Activated CD4-positive, alpha-beta memory T cell treated with anti-CD3 and anti-CD28 coated beads for 36 hours (primary cell): ENCODE measurements at regions of chr17 and their contacts with region 1.

Region 1: GRCh38 chr17:7687908-7688807 is at the start of gene WRAP53:
- DNase-seq: peak; percentile 98
- H3K4me3 Mint-ChIP-seq: peak within 1 kb of the TSS; percentile 100
- H3K27ac Mint-ChIP-seq: peak within 1 kb of the TSS; percentile 100
- H3K4me1 Mint-ChIP-seq: peaks cover 31% of the 10 kb centered on the region
- H3K27me3 Mint-ChIP-seq: no peaks in the 10 kb centered on the region
- total RNA-seq, gene WRAP53: 20.2 to 23.3 TPM

Region 2: GRCh38 chr17:7045909-7046724 is 642.0 kb before region 1 on chr17:
- CTCF ChIA-PET with region 1: interaction called, 6 read pairs
- POLR2A ChIA-PET with region 1: no interaction called
- intact Hi-C with region 1: loop called (anchors 2 kb)
- DNase-seq: peak; percentile 63
- H3K4me3 Mint-ChIP-seq: peak overlapping the region; percentile 70
- H3K27ac Mint-ChIP-seq: peak overlapping the region; percentile 87
- H3K4me1 Mint-ChIP-seq: peaks cover 45% of the 10 kb centered on the region
- H3K27me3 Mint-ChIP-seq: peaks cover 2% of the 10 kb centered on the region

Region 3: DNA sequence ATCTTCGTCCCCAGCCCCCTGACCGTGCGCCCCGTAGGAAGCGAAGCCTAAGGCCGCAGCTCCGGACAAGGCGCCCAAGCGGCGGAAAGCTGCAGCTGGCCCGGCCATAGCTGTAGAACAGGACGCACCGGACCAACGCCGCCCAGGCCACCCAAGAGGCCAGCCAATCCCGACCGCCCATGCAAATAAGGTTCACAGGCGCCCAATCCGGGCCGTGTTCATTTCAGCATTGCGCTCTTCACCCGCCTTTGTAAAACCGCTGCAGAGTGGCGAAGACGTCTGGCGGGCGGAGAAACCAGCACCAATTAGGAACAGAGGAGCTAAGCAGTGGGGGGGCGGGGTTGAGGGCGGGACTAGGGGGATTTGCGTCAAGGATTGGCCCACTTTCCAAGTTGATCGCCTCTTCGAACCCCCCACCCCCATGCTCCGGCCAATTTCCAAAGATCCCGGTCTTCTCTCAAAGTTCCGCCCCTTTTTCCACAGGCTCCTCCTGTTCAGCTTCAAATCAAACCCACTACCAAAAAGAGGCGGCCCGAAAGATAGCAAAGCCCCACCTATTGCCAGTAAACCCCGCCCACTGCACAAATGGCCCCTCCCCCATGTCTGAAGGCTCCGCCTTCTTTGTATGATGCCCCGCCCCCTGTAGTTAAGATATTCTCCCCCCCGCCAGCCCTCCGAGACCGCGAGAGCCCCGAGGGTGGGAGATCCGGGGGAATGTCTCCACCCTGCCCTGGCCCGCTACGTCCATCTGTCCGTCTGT is 284.0 kb before region 1 on chr17 and contains the start of gene TMEM256:
- CTCF ChIA-PET with region 1: interaction called, 3 read pairs
- POLR2A ChIA-PET with region 1: interaction called, 8 read pairs
- intact Hi-C with region 1: loop called (anchors 1 kb)
- DNase-seq: peak; percentile 99
- H3K4me3 Mint-ChIP-seq: peak within 1 kb of the TSS; percentile 97
- H3K27ac Mint-ChIP-seq: peak within 1 kb of the TSS; percentile 92
- H3K4me1 Mint-ChIP-seq: peaks cover 25% of the 10 kb centered on the region
- H3K27me3 Mint-ChIP-seq: no peaks in the 10 kb centered on the region
- total RNA-seq, gene TMEM256: 87.0 to 88.5 TPM

Region 4: GRCh38 chr17:7572588-7573323 is 115.4 kb before region 1 on chr17:
- CTCF ChIA-PET with region 1: interaction called, 7 read pairs
- POLR2A ChIA-PET with region 1: interaction called, 18 read pairs
- intact Hi-C with region 1: loop called (anchors 1 kb)
- DNase-seq: peak; percentile 100
- H3K4me3 Mint-ChIP-seq: peak overlapping the region; percentile 99
- H3K27ac Mint-ChIP-seq: peak overlapping the region; percentile 100
- H3K4me1 Mint-ChIP-seq: peaks cover 50% of the 10 kb centered on the region
- H3K27me3 Mint-ChIP-seq: peaks cover 2% of the 10 kb centered on the region

Region 5: DNA sequence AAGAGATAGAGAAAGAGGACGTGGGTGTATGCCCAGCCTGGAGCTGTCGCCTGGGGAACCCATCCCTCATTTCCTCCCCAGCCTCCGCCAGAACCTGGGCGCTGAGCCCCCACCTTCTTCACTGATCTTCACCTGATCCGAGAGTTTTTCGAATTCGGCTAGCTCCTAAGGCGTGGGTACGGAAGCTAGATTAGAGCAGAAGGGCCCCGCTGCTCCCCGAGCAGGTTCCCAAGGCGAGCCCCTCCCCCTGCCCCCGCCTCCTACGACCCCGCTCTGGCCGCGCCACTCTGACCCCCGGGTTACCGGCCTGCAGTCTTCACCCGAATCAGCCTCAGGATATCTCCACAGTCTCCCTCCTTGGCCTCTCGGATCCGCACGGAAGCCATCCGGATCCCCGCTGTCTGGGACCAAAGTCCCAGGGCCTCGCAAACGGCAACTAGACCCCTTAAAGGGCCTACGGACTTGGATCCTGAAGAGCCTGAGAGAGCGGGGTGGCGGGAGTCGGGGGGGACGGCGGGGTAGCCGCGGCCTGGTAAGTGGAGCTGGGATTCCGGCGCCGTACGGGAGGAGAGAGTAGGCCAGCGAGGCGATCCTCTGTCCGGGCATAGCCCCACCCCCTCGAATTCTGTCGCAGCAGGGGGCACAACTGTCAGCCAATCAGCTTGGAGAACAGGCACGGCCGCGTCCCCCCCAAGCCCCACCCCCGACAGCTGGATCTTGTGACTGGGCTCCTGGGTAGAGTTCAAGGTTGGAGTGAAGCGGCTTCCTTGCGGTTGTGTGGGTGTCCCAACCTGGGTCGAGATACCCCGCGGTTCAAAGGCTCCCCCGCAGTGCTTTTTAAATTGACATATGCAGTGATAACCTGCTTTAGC is 60.7 kb before region 1 on chr17 and contains the start of gene SAT2:
- CTCF ChIA-PET with region 1: interaction called, 61 read pairs
- POLR2A ChIA-PET with region 1: interaction called, 24 read pairs
- intact Hi-C with region 1: loop called (anchors 1 kb)
- DNase-seq: peak; percentile 92
- H3K4me3 Mint-ChIP-seq: peak within 1 kb of the TSS; percentile 89
- H3K27ac Mint-ChIP-seq: peak within 1 kb of the TSS; percentile 58
- H3K4me1 Mint-ChIP-seq: peaks cover 11% of the 10 kb centered on the region
- H3K27me3 Mint-ChIP-seq: no peaks in the 10 kb centered on the region
- total RNA-seq, gene SAT2: 27.4 to 28.2 TPM

Region 6: DNA sequence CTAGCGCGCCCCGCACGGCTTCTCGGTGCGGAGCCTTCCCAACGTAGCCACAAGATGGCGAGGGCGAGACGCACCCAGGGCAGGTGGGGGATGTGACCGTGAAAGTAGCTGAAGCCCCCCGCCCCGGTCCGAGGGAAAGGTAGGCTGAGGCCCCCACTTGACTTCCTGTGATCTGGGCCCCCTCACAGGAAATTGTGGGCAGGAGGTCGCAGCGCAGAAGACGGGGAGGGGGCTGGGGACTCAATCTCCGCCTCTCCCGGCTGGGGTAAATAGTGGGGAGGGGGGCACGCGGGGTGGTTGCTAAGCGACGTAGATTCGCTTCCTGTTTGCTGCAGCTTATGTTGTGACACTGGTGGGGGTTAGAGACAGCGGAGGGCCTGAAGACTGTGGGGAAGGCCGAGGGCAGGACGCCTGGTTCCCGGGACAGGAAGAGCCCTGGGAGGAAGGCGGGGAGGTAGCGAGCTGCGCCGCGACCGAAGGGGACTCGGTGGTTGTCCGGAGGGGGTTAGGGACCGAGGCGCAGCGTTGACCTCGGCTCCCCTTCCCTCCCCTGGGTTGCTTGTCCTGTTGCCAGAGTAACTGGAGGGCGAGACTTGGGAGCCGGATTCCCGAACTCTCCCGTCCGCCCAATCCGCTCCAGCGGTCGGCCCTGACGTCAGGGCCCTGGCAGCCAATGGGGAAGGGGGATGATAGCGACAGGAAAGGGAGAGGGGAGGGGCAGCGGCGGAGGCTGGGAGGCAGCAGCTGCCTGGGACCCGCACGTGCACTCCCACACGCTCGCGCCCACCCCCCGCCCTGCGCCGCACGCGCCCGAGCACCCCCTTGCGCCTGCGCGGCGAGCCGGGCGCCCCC is 147.0 kb after region 1 on chr17:
- CTCF ChIA-PET with region 1: interaction called, 10 read pairs
- POLR2A ChIA-PET with region 1: interaction called, 6 read pairs
- intact Hi-C with region 1: loop called (anchors 2 kb)
- DNase-seq: peak; percentile 95
- H3K4me3 Mint-ChIP-seq: peak overlapping the region; percentile 90
- H3K27ac Mint-ChIP-seq: peak overlapping the region; percentile 95
- H3K4me1 Mint-ChIP-seq: peaks cover 43% of the 10 kb centered on the region
- H3K27me3 Mint-ChIP-seq: no peaks in the 10 kb centered on the region

Region 7: GRCh38 chr17:8435245-8436168 is 747.3 kb after region 1 on chr17 and contains the start of gene NDEL1:
- CTCF ChIA-PET with region 1: no interaction called
- POLR2A ChIA-PET with region 1: no interaction called
- intact Hi-C with region 1: loop called (anchors 10 kb)
- DNase-seq: peak; percentile 99
- H3K4me3 Mint-ChIP-seq: peak within 1 kb of the TSS; percentile 92
- H3K27ac Mint-ChIP-seq: peak within 1 kb of the TSS; percentile 91
- H3K4me1 Mint-ChIP-seq: peaks cover 31% of the 10 kb centered on the region
- H3K27me3 Mint-ChIP-seq: no peaks in the 10 kb centered on the region
- total RNA-seq, gene NDEL1: 58.0 to 62.8 TPM